ENCODE measurements at regions of chr19 and their contacts with region 1.

Region 1: DNA sequence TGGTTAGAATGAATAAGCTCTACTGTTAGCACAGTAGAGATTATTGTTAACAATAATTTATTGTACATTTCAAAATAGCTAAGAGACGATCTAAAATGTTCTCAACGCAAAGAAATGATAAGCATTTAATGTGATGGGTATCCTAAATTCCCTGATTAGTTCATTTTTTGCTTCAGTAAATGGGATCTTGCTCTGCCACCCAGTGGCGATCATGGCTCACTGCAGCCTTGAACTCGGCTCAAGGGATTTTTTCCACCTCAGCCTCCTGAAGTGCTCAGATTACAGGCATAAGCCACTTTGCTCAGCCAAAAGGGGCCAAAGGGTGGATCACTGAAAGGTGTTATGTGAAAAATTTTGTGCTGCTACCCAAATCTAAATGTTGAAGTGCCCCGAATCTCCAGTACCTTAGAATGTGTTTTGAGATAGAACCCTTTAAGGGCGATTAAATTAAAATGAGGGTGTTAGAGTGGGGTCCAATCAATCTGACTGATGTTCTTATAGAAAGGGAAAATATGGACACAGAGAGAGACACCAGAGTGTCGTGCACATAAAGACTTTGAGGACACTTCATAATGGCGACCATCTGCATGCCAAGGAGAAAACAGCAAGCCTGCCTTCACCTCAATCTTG is 31.5 kb upstream of the ZNF766 start:
- DNase-seq: peak; percentile 75
- ATAC-seq: peak; percentile 99
- H3K4me3 ChIP-seq: no peak overlapping the region
- H3K27ac ChIP-seq: no peak overlapping the region
- H3K4me1 ChIP-seq: no peaks in the 10 kb centered on the region
- H3K27me3 ChIP-seq: no peaks in the 10 kb centered on the region
- CTCF ChIP-seq: peak; percentile 92
- POLR2A ChIP-seq: peak; percentile 29; the same call in 1 of the 2 replicates
- RAD21 ChIP-seq: peak; percentile 78

Region 2: DNA sequence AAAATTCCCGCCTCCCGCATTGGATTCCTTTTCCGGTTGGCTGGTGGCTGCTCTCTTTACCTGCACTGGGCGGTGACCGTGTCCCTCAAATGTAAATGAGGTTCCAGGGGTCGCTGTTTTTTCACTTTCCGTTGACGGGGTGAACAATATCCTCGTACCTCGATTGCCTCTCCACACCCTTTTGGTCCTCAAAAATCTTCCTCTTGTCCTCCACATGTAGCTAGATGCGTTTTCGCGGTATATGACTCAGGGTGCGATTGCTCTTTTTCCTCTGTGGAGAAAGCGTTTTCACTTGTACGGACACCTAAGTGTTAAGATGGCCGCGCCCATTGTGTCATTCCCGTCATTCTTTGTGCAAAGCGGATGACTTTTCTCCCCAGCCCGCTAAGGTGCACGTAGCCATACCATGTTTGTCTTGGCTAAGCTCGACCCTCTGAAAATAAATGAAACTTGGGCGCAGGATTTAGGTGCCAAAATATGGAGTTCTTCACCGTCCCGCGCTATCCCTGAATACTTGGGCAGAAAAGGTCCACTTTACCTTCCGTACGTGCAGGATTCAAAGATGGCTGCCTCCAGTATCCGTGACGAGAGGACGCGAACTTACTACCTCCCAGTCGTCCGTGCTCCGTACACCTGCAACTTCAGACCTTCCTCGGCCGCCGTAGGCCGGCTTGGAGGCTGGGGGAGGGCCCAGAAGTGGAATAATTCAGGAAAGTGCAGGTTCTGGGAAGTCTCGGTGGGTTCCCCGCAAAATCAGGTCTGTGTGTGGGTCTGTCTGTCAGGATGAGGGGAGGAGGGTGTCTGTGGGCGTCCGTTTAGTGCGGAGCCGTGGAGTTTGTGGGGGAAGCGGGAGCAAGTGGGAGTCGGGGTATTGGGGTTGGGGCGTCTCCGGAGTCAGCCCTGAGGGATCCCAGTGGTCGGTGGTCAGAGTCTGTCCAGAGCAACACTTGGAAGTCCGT is 310.8 kb before region 1 on chr19 and contains the start of gene ZNF613:
- CTCF ChIA-PET with region 1: no interaction called
- POLR2A ChIA-PET with region 1: no interaction called
- dilution Hi-C with region 1: no loop called
- in situ Hi-C with region 1: no loop called
- intact Hi-C with region 1: loop called (anchors 10 kb)
- DNase-seq: peak; percentile 94
- ATAC-seq: peak; percentile 96
- H3K4me3 ChIP-seq: peak within 1 kb of the TSS; percentile 76
- H3K27ac ChIP-seq: peak within 1 kb of the TSS; percentile 83
- H3K4me1 ChIP-seq: no peaks in the 10 kb centered on the region
- H3K27me3 ChIP-seq: no peaks in the 10 kb centered on the region
- CTCF ChIP-seq: 0 out of 2 replicates have a peak, but pooled peaks have one; percentile 3
- POLR2A ChIP-seq: no peak
- RAD21 ChIP-seq: no peak
- total RNA-seq, gene ZNF613: 7.8 and 10.4 TPM in 2 replicates

Region 3: DNA sequence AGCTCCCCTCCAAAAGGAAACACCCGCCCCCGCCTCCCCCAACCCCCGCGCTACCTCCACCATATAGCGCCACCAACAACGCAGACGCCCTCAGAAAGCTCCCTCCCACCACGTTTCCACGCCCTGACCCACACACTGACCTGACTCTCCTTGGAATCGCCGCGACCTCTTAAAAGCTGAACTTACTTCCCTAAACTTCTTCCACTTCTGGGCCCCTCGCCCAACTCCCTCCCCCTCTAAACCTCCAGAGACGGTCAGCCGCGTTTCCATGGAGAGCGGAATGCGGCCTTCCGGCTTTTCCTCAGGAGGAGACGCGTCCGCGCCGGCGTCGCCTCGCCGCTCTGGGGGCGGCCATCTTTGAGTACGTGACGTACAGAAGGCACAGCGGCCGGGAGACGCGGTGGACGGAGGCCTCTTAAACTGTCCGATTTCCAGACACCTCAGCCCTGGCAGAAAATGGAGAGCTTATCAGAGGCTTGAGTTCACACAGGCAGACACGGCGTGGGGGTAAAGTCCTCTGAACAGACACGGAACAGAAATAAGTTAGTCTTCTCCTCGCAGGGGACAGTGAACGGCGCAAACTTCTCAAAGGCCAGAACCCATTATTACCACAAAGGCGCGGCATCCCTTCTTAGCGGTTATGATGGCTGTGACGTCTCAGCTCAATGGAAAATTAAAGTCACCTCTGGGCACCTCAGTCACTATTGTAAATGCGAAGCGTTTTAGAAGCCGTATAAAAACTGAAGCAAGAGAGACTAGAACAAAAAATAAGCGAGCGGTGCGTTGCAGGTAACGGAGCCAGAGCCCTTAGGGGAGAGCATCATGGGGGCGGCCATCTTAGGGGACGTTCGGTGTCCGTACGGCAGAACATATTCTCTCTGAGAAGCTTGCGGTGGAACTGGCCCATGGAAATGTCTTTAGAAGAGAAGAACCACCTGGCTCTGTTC is 189.1 kb before region 1 on chr19 and contains the start of gene ZNF432:
- CTCF ChIA-PET with region 1: no interaction called
- POLR2A ChIA-PET with region 1: no interaction called
- dilution Hi-C with region 1: no loop called
- in situ Hi-C with region 1: no loop called
- intact Hi-C with region 1: loop called (anchors 5 kb)
- DNase-seq: peak; percentile 91
- ATAC-seq: peak; percentile 97
- H3K4me3 ChIP-seq: peak within 1 kb of the TSS; percentile 85
- H3K27ac ChIP-seq: peak within 1 kb of the TSS; percentile 96
- H3K4me1 ChIP-seq: no peaks in the 10 kb centered on the region
- H3K27me3 ChIP-seq: no peaks in the 10 kb centered on the region
- CTCF ChIP-seq: no peak
- POLR2A ChIP-seq: peak; percentile 70
- RAD21 ChIP-seq: no peak
- total RNA-seq, gene ZNF432: 12.4 and 12.8 TPM in 2 replicates

Region 4: DNA sequence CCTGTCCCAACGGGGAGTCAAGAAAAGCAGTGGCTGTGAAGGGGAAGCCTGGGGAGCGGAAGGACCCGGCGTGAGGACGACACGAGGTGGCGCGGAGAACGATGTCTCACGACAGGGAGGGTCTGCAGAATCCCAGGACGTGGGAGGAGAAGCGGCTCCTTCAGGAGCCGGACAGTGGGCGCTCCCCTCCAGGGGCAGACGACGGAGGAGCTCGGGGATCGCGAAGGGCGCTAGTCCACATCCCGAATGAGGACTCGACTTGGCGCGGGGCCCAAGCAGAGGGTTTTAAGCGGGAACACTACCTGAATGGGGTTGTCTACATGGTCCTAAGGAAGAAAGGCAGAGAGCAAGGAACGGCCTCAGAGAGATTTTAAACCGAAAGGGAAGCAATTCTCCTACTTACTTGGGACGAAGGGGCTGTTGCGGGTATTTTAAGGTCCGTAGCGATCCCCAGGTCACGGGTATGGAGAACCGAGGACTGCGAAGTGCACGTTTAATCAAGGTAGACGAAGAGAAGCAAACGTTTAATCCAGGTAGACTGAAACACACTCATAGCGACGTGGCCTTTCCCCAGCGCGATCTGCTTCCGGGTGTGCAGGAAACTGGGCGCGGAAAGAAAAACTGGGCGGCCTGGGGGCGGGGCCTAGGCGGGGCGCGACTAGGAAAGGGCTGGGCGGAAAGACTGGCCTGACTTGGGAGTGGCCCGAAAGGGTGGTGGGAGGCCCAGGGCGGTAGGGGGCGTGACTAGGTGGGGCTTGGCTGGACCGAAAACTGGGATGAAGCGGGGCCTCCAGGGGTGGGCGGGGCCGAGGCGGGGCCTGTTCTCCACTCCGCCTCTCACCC is 142.5 kb before region 1 on chr19 and contains the start of gene ZNF841:
- CTCF ChIA-PET with region 1: no interaction called
- POLR2A ChIA-PET with region 1: no interaction called
- dilution Hi-C with region 1: no loop called
- in situ Hi-C with region 1: no loop called
- intact Hi-C with region 1: loop called (anchors 2 kb)
- DNase-seq: peak; percentile 92
- ATAC-seq: peak; percentile 100
- H3K4me3 ChIP-seq: peak within 1 kb of the TSS; percentile 94
- H3K27ac ChIP-seq: peak within 1 kb of the TSS; percentile 88
- H3K4me1 ChIP-seq: peaks cover 3% of the 10 kb centered on the region; the same call in 1 of the 2 replicates
- H3K27me3 ChIP-seq: no peaks in the 10 kb centered on the region
- CTCF ChIP-seq: no peak; the same call in 1 of the 2 replicates
- POLR2A ChIP-seq: peak; percentile 82
- RAD21 ChIP-seq: peak; percentile 1; the same call in 1 of the 2 replicates
- total RNA-seq, gene ZNF841: 25.8 and 28.9 TPM in 2 replicates

Region 5: DNA sequence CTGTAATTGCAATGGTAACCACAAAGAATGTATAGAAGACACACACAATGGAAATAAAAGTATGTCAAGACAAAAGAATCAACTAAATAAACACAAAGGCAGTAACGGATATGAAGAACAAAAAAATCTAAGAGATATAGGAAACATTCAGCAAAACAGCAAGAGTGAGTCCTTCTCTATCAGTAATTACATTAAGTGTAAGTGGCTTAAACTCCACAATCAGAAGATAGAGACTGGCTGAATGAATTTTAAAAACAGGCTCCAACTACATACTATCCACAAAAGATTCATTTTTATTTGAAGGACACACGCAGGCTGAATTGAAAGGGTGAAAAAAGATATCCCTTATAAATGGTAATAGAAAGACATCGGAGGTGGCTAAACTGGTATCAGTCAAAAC is 117.6 kb before region 1 on chr19:
- CTCF ChIA-PET with region 1: no interaction called
- POLR2A ChIA-PET with region 1: no interaction called
- dilution Hi-C with region 1: no loop called
- in situ Hi-C with region 1: no loop called
- intact Hi-C with region 1: no loop called
- DNase-seq: no peak
- ATAC-seq: no peak
- H3K4me3 ChIP-seq: no peak overlapping the region
- H3K27ac ChIP-seq: no peak overlapping the region
- H3K4me1 ChIP-seq: no peaks in the 10 kb centered on the region
- H3K27me3 ChIP-seq: no peaks in the 10 kb centered on the region
- CTCF ChIP-seq: no peak
- POLR2A ChIP-seq: no peak
- RAD21 ChIP-seq: no peak

Region 6: DNA sequence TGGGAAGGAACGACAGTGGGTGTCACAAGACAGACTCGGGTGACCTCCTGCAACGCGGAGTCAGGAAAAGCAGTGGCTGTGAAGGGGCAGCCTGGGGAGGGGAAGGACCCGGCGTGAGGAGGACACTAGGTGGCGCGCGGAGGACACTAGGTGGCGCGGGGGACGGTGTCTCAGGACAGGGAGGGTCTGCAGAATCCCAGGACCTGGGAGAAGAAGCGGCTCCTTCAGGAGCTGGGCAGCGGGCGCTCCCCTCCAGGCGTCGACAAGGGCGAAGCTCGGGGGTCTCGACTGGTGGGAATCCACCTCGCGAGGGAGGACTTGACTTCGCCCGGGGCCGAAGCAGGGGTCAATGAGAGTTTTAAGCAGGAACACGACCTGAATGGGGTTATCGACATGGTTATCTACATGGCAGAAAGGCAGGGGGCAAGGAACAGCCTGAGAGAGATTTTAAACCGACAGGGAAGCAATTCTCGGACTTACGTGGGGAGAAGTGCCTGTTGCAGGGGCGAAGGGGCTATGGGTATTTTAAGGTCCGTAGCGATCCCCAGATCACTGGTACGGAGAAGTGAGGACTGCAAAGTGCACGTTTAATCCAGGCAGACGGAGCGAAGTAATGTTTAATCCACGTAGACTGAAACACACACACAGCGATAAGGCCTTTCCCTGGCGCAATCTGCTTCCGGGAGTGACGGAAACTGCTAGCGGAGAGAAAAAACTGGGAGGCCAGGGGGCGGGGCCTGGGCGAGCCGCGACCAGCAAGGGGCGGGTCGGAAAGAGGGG is 98.4 kb before region 1 on chr19 and contains the start of gene ZNF616:
- CTCF ChIA-PET with region 1: interaction called, 6 read pairs
- POLR2A ChIA-PET with region 1: no interaction called
- dilution Hi-C with region 1: no loop called
- in situ Hi-C with region 1: no loop called
- intact Hi-C with region 1: loop called (anchors 1 kb)
- DNase-seq: peak; percentile 91
- ATAC-seq: peak; percentile 82
- H3K4me3 ChIP-seq: peak within 1 kb of the TSS; percentile 53
- H3K27ac ChIP-seq: peak within 1 kb of the TSS; percentile 91
- H3K4me1 ChIP-seq: peaks cover 2% of the 10 kb centered on the region
- H3K27me3 ChIP-seq: no peaks in the 10 kb centered on the region
- CTCF ChIP-seq: peak; percentile 76
- POLR2A ChIP-seq: peak; percentile 83
- RAD21 ChIP-seq: peak; percentile 61
- total RNA-seq, gene ZNF616: 13.3 and 13.6 TPM in 2 replicates

Measured in IMR-90 (cell line).